ENCODE measurements at regions of chr11 and their contacts with region 1.

Region 1: GRCh38 chr11:60485986-60486385 is 6.6 kb upstream of the MS4A12 start:
- H3K4me3 Mint-ChIP-seq: no peak overlapping the region
- H3K27ac Mint-ChIP-seq: peak overlapping the region; percentile 35
- H3K4me1 Mint-ChIP-seq: peaks cover 34% of the 10 kb centered on the region
- H3K27me3 Mint-ChIP-seq: peaks cover 1% of the 10 kb centered on the region

Region 2: DNA sequence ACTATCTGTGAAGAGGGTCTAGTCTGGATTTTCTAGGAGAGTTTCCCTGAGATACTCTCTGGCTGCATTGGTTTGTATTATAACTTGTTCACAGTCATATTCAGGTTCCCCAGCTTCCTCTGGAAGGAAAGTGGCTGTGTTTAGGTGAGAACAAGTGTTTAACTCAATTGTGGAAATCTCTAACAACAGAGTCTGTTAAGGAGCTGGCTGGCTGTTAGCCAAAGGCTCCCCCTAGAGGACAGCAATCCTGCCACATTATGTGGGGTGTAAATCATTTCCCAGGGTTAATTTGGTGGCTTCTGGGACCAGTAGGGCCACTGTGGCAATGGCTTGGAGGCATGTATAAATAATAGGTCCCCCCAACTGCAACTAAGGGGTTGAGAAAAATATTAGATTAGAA is 140.5 kb before region 1 on chr11:
- intact Hi-C with region 1: loop called (anchors 5 kb)
- H3K4me3 Mint-ChIP-seq: no peak overlapping the region
- H3K27ac Mint-ChIP-seq: no peak overlapping the region
- H3K4me1 Mint-ChIP-seq: peaks cover 50% of the 10 kb centered on the region
- H3K27me3 Mint-ChIP-seq: peaks cover 2% of the 10 kb centered on the region

Region 3: GRCh38 chr11:60515144-60515855 is 29.3 kb after region 1 on chr11 and contains the start of gene MS4A13:
- intact Hi-C with region 1: no loop called
- H3K4me3 Mint-ChIP-seq: no peak within 1 kb of the TSS
- H3K27ac Mint-ChIP-seq: no peak within 1 kb of the TSS
- H3K4me1 Mint-ChIP-seq: peaks cover 15% of the 10 kb centered on the region
- H3K27me3 Mint-ChIP-seq: peaks cover 30% of the 10 kb centered on the region

Region 4: DNA sequence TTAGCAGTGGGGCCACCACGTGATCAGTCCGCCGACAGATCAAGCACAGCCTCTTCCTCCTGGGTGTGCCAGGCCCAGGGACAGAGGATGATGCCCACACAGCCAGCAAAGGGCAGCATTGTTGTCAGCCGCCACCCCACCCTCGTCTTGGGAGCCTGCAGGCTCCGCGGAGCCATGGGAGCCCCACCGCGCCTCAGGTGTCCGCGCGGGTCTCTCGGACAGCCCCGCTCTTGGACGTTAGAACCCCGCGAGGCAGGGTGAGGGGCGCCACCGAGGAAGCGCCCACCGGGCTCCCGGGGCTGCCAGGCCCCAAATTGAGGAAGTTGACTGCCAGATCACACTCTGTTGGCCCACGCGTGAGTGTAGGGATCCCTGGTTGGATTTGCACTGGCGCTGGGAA is 129.5 kb after region 1 on chr11:
- intact Hi-C with region 1: loop called (anchors 2 kb)
- H3K4me3 Mint-ChIP-seq: no peak overlapping the region
- H3K27ac Mint-ChIP-seq: no peak overlapping the region
- H3K4me1 Mint-ChIP-seq: peaks cover 5% of the 10 kb centered on the region
- H3K27me3 Mint-ChIP-seq: no peaks in the 10 kb centered on the region

Measured in dendritic cell treated with granulocyte-macrophage colony-stimulating factor and Interleukin-4, amounts not matched to agents 40 ng/mL and 50 ng/mL, for 4 days (primary cell).